ENCODE measurements at regions of chr16 and their contacts with region 1.

Region 1: GRCh38 chr16:832652-833336 is 32.3 kb upstream of the GNG13 start:
- DNase-seq: no peak
- ATAC-seq: peak; percentile 66
- H3K4me3 ChIP-seq: no peak overlapping the region
- H3K27ac ChIP-seq: no peak overlapping the region
- H3K4me1 ChIP-seq: no peaks in the 10 kb centered on the region
- H3K27me3 ChIP-seq: peaks cover 21 to 68% of the 10 kb centered on the region in 2 experiments
- CTCF ChIP-seq: no peak
- EP300 ChIP-seq: no peak
- POLR2A ChIP-seq: no peak
- RAD21 ChIP-seq: no peak

Region 2: DNA sequence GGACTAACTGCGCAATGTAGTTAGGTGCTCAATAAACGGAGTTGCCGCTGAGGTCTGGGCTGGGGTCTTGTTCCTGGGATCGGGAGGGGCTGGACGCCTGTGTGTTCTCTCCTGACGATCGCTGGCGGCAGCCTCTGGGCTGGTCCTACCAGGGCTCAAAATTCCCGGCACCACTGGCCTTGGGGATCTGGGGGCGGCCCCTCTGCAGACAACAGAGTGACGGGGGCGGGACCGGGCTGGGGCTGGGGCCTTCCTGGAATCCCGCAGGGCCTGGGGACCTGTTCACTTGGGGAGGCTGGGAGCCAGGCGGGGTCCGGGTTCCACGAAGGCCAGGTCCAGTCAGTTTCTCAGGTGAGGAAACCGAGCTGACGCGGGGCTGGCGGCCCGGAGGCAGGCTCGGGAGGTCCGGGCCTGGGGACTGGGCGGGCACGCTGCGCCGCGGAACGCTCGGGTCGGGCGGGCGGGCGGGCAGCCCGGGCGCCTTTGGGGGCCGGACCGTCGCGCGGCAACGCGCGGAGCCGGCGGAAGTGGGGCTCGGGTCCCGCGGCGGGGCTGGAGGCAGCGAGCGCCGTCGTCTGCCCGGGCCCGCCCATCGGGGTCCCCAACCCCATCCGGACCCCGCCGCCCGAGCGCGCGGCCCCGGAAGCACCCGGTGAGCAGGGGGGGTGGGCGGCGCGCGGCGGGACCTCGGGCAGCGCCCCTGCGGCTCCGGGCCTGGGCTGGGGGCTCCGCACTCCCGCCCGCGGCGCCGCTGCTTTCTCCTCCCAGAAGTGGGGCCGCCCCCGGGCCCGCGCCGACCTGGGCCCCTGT is 263.1 kb before region 1 on chr16 and contains the start of gene PIGQ:
- CTCF ChIA-PET with region 1: no interaction called
- POLR2A ChIA-PET with region 1: no interaction called
- in situ Hi-C with region 1: no loop called
- intact Hi-C with region 1: no loop called
- DNase-seq: peak; percentile 70
- ATAC-seq: peak; percentile 70
- H3K4me3 ChIP-seq: peak within 1 kb of the TSS; percentile 88 to 97 (median 92)
- H3K27ac ChIP-seq: peak within 1 kb of the TSS; percentile 79
- H3K4me1 ChIP-seq: peaks cover 56% of the 10 kb centered on the region
- H3K27me3 ChIP-seq: peaks cover 4 to 17% of the 10 kb centered on the region in 2 experiments
- CTCF ChIP-seq: no peak
- EP300 ChIP-seq: no peak
- POLR2A ChIP-seq: peak in 1 of 2 experiments; percentile 41; a peak in 1 of 4 replicates
- RAD21 ChIP-seq: no peak
- total RNA-seq, gene PIGQ: 8.4 and 19.7 TPM in 2 replicates

Region 3: DNA sequence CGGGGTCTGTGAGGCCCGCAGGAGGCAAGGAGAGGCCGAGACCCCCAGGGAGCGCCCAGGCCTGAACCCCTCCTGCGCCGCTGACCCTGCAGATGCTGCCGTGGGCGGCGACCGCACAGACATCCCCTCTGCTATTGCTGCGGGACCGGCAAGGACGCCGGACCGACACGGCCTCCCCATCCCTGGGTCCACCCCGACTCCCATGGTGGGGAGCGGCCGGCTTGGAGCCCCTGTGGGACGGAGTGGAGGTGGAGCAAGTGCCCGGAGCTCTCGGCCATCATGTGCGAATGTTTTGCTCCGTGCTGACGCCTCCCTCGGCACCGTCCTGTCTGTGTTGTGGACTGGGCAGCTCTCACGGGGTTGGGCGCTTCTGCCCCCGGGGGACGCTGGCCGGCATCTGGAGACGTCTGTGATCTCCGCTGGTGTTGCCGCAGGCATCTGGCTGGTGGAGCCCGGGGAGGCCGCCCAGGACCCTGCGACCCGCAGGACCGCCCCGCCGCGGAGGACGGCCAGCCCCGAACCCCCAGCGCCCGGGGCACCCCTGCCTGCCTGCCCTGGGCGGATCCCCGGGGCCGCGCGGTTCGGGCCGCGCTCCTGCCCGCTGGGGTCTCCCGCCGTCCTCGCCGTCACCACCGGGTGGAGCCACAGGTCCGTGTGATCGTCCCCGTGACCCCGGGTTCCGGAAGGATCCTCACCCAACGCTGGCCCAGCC is 19.4 kb before region 1 on chr16:
- CTCF ChIA-PET with region 1: no interaction called
- POLR2A ChIA-PET with region 1: no interaction called
- in situ Hi-C with region 1: no loop called
- intact Hi-C with region 1: no loop called
- DNase-seq: peak; percentile 12
- ATAC-seq: peak; percentile 87
- H3K4me3 ChIP-seq: no peak overlapping the region
- H3K27ac ChIP-seq: no peak overlapping the region
- H3K4me1 ChIP-seq: no peaks in the 10 kb centered on the region
- H3K27me3 ChIP-seq: peaks cover 26 to 84% of the 10 kb centered on the region in 2 experiments
- CTCF ChIP-seq: peak; percentile 88
- EP300 ChIP-seq: no peak
- POLR2A ChIP-seq: no peak
- RAD21 ChIP-seq: peak; percentile 94

Region 4: DNA sequence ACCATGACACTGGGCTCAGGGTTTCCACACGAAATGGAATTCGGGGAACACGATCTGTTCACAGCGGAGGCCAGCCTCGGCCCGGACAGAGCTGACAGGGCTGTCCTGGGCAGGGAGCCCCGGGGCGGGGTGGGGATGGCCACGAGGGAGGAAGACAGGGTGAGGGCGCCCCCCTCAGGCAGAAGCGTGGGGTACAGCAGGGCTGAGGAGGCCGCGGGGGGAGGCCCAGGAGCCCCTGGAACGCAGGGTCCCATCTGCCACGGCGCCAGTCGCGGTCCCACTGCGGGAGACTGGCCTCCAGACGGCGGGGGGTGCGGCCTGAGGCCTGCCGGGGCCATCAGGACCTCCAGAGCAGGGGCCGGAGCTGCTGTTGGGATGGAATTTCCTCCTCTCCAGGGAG is 62.0 kb after region 1 on chr16:
- CTCF ChIA-PET with region 1: no interaction called
- POLR2A ChIA-PET with region 1: no interaction called
- in situ Hi-C with region 1: loop called (anchors 10 kb)
- intact Hi-C with region 1: no loop called
- DNase-seq: no peak
- ATAC-seq: no peak; the same call in 2 of the 3 replicates
- H3K4me3 ChIP-seq: no peak overlapping the region
- H3K27ac ChIP-seq: no peak overlapping the region
- H3K4me1 ChIP-seq: no peaks in the 10 kb centered on the region
- H3K27me3 ChIP-seq: no peaks in the 10 kb centered on the region; a peak in 2 of 5 replicates
- CTCF ChIP-seq: peak; percentile 26; the same call in 1 of the 2 replicates
- EP300 ChIP-seq: no peak
- POLR2A ChIP-seq: no peak
- RAD21 ChIP-seq: no peak

Measured in HepG2 (cell line).